A549 (cell line): ENCODE measurements at regions of chr2 and their contacts with region 1.

Region 1: DNA sequence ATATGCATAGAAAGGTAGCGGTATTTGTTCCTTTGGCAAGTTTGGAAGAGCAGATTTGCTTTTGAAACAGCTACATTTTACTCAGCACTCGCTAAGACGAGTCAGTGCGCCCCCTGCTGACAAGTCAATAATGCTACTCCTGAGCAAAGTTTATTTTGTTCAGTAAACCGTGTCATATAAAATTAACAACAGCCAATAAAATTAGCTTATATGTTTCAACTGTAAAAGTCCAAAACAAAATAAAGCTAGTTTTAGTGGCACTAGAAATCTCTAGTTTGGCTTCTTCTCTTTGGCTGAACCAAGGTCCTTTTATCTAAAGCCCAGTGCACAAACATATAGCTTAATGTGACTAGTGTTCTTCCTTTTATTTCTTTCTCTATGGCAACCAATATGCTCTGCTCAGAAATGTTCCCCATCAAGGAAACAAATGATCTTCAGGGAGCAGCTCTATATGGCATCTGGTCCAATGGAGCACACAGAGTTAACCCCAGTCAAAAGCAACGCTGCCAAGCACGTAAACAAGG is 4.2 kb upstream of the POU3F3 start:
- DNase-seq: peak in 1 of 2 experiments; percentile 66
- ATAC-seq: peak; percentile 41 to 59; a peak in 3 of 6 replicates
- H3K4me3 ChIP-seq: no peak overlapping the region
- H3K27ac ChIP-seq: no peak overlapping the region
- H3K4me1 ChIP-seq: peaks cover 6% of the 10 kb centered on the region; the same call in 1 of the 3 replicates
- CTCF ChIP-seq: peak; percentile 82
- EP300 ChIP-seq: no peak
- POLR2A ChIP-seq: no peak
- RAD21 ChIP-seq: peak; percentile 65 to 70

Region 2: DNA sequence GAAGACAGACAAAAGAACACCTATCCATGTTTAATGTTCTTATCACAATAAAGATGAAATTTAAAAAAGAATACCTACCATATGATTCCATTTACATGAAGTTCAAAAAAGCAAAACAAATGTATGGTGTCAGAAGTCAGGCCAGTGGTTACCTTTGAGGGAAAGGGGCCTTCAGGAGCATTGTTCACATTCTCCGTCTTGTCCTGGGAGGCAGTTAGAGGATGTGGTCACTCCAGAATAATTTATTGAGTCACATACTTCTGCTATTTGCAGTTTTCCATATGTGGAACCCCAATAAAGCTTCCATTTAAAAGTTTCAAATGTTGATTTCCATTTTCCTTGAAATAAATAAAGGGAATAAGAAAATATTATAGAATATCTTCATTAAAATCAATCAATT is 37.4 kb before region 1 on chr2:
- CTCF ChIA-PET with region 1: no interaction called
- POLR2A ChIA-PET with region 1: no interaction called
- DNase-seq: no peak
- ATAC-seq: no peak
- H3K4me3 ChIP-seq: no peak overlapping the region
- H3K27ac ChIP-seq: no peak overlapping the region
- H3K4me1 ChIP-seq: no peaks in the 10 kb centered on the region
- CTCF ChIP-seq: no peak
- EP300 ChIP-seq: no peak
- POLR2A ChIP-seq: no peak
- RAD21 ChIP-seq: no peak

Region 3: GRCh38 chr2:104834431-104835153 is 15.1 kb before region 1 on chr2:
- CTCF ChIA-PET with region 1: interaction called, 20 read pairs
- POLR2A ChIA-PET with region 1: no interaction called
- DNase-seq: no peak
- ATAC-seq: no peak
- H3K4me3 ChIP-seq: no peak overlapping the region
- H3K27ac ChIP-seq: no peak overlapping the region
- H3K4me1 ChIP-seq: no peaks in the 10 kb centered on the region
- CTCF ChIP-seq: no peak
- EP300 ChIP-seq: no peak
- POLR2A ChIP-seq: no peak
- RAD21 ChIP-seq: no peak

Region 4: GRCh38 chr2:104860451-104860790 is 10.7 kb after region 1 on chr2:
- CTCF ChIA-PET with region 1: interaction called, 11 read pairs
- POLR2A ChIA-PET with region 1: no interaction called
- DNase-seq: no peak
- ATAC-seq: no peak
- H3K4me3 ChIP-seq: no peak overlapping the region
- H3K27ac ChIP-seq: no peak overlapping the region
- H3K4me1 ChIP-seq: peaks cover 3% of the 10 kb centered on the region; the same call in 1 of the 3 replicates
- CTCF ChIP-seq: no peak
- EP300 ChIP-seq: no peak
- POLR2A ChIP-seq: no peak
- RAD21 ChIP-seq: no peak

Region 5: DNA sequence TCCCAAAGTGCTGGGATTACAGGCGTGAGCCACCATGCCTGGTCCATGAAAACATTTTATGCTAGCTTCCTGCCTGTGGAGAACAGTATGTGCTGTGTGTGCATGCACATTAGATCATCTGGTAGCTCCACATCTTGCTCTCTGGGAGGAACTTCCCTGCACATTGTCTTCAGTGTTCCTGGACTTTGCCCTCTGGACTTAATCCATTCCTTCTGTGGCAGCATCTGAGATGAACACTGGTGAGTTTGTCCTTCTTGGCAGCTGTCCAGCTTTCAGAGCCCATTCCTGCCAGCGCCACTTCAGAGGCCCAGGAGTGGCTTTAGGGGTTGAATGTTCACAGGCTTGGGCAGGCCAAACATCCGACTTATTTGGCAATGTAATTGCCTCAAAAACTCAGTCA is 69.4 kb after region 1 on chr2:
- CTCF ChIA-PET with region 1: no interaction called
- POLR2A ChIA-PET with region 1: no interaction called
- DNase-seq: peak in 1 of 2 experiments; percentile 31
- ATAC-seq: no peak
- H3K4me3 ChIP-seq: no peak overlapping the region
- H3K27ac ChIP-seq: no peak overlapping the region
- H3K4me1 ChIP-seq: no peaks in the 10 kb centered on the region
- CTCF ChIP-seq: no peak
- EP300 ChIP-seq: no peak
- POLR2A ChIP-seq: no peak
- RAD21 ChIP-seq: no peak

Region 6: DNA sequence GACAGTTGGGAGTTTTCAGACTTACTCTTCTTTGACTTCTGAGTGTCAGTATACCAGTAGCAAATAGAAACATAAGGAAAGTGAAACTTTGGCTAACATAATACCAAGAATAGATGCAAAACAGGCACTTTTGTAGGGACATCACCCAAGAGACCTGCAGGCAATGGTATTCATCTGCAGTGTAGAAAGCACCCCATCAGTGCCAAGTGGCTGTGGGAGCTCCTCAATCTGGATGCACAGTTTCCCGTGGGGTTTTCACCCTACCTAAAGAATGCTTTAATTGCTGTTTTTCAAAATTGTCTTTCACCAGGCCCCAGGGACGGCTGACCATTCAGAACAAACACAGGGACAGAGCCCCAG is 295.2 kb after region 1 on chr2:
- CTCF ChIA-PET with region 1: no interaction called
- POLR2A ChIA-PET with region 1: no interaction called
- DNase-seq: no peak
- ATAC-seq: no peak
- H3K4me3 ChIP-seq: no peak overlapping the region
- H3K27ac ChIP-seq: no peak overlapping the region
- H3K4me1 ChIP-seq: no peaks in the 10 kb centered on the region
- CTCF ChIP-seq: no peak
- EP300 ChIP-seq: no peak
- POLR2A ChIP-seq: no peak
- RAD21 ChIP-seq: no peak